ENCODE measurements at regions of chr19 and their contacts with region 1.

Region 1: GRCh38 chr19:51338563-51339312 is 3.2 kb downstream of the VSIG10L start:
- DNase-seq: peak; percentile 88
- ATAC-seq: peak; percentile 76
- H3K4me3 ChIP-seq: peak overlapping the region; percentile 72
- H3K27ac ChIP-seq: peak overlapping the region; percentile 14; the same call in 1 of the 2 replicates
- H3K4me1 ChIP-seq: peaks cover 16% of the 10 kb centered on the region; the same call in 1 of the 2 replicates
- H3K27me3 ChIP-seq: no peaks in the 10 kb centered on the region
- CTCF ChIP-seq: peak; percentile 98

Region 2: GRCh38 chr19:51246164-51246552 is 92.6 kb before region 1 on chr19:
- CTCF ChIA-PET with region 1: no interaction called
- POLR2A ChIA-PET with region 1: no interaction called
- intact Hi-C with region 1: no loop called
- DNase-seq: peak; percentile 46
- ATAC-seq: no peak; the same call in 1 of the 2 replicates
- H3K4me3 ChIP-seq: no peak overlapping the region
- H3K27ac ChIP-seq: no peak overlapping the region
- H3K4me1 ChIP-seq: no peaks in the 10 kb centered on the region
- H3K27me3 ChIP-seq: peaks cover 36% of the 10 kb centered on the region
- CTCF ChIP-seq: no peak

Region 3: GRCh38 chr19:51367565-51368365 is 29.0 kb after region 1 on chr19:
- CTCF ChIA-PET with region 1: interaction called, 10 read pairs
- POLR2A ChIA-PET with region 1: interaction called, 26 read pairs
- intact Hi-C with region 1: loop called (anchors 1 kb)
- DNase-seq: peak; percentile 99
- ATAC-seq: peak; percentile 66
- H3K4me3 ChIP-seq: peak overlapping the region; percentile 87
- H3K27ac ChIP-seq: peak overlapping the region; percentile 87
- H3K4me1 ChIP-seq: peaks cover 37% of the 10 kb centered on the region
- H3K27me3 ChIP-seq: no peaks in the 10 kb centered on the region
- CTCF ChIP-seq: no peak

Region 4: DNA sequence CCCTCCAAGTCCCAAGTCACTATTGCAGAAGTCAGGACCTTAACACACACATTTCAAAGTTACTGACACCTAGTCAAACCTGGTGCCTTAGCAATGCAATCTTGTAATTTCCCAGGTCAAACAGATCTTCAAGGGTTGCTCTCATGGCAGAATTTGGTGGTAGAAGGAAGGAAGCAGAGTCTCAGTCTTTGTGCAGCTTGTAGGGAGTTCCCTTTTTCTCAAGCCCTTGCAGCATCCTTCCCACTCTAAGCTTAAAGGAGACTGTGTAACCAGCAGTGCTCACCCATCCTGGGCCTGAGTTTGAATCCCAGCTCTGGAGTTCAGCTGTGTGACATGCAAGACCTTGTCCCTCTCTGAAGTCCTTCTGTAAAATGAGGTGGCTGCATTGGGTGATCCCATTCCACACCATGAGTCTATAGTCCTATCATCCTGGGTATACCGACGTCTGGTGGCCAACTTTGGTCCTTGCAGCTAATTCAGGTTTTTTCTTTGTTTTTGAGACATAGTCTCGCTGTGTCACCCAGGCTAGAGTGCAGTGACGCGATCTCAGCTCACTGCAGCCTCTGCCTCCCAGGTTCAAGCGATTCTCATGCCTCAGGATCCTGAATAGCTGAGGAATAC is 68.9 kb after region 1 on chr19:
- CTCF ChIA-PET with region 1: interaction called, 6 read pairs
- POLR2A ChIA-PET with region 1: no interaction called
- intact Hi-C with region 1: loop called (anchors 1 kb)
- DNase-seq: peak; percentile 63
- ATAC-seq: peak; percentile 68; the same call in 1 of the 2 replicates
- H3K4me3 ChIP-seq: no peak overlapping the region
- H3K27ac ChIP-seq: no peak overlapping the region
- H3K4me1 ChIP-seq: peaks cover 13% of the 10 kb centered on the region
- H3K27me3 ChIP-seq: no peaks in the 10 kb centered on the region
- CTCF ChIP-seq: peak; percentile 58

Region 5: GRCh38 chr19:51514866-51515481 is 176.2 kb after region 1 on chr19:
- CTCF ChIA-PET with region 1: no interaction called
- POLR2A ChIA-PET with region 1: no interaction called
- intact Hi-C with region 1: loop called (anchors 5 kb)
- DNase-seq: peak; percentile 89
- ATAC-seq: peak; percentile 84
- H3K4me3 ChIP-seq: no peak overlapping the region
- H3K27ac ChIP-seq: no peak overlapping the region
- H3K4me1 ChIP-seq: no peaks in the 10 kb centered on the region
- H3K27me3 ChIP-seq: peaks cover 36% of the 10 kb centered on the region; the same call in 1 of the 2 replicates
- CTCF ChIP-seq: peak; percentile 93

Region 6: GRCh38 chr19:51660975-51661600 is 322.4 kb after region 1 on chr19:
- CTCF ChIA-PET with region 1: interaction called, 9 read pairs
- POLR2A ChIA-PET with region 1: no interaction called
- intact Hi-C with region 1: loop called (anchors 1 kb)
- DNase-seq: peak; percentile 95
- ATAC-seq: peak; percentile 85
- H3K4me3 ChIP-seq: no peak overlapping the region
- H3K27ac ChIP-seq: no peak overlapping the region
- H3K4me1 ChIP-seq: peaks cover 5% of the 10 kb centered on the region
- H3K27me3 ChIP-seq: peaks cover 18% of the 10 kb centered on the region; the same call in 1 of the 2 replicates
- CTCF ChIP-seq: peak; percentile 69

Measured in PC-3 (cell line).